ENCODE measurements at regions of chr6 and their contacts with region 1.

Region 1: GRCh38 chr6:55239099-55239498 is 64.8 kb downstream of the HCRTR2 start:
- DNase-seq: no peak
- H3K4me3 ChIP-seq: no peak overlapping the region
- H3K27ac ChIP-seq: no peak overlapping the region
- H3K27me3 ChIP-seq: no peaks in the 10 kb centered on the region
- CTCF ChIP-seq: no peak

Region 2: DNA sequence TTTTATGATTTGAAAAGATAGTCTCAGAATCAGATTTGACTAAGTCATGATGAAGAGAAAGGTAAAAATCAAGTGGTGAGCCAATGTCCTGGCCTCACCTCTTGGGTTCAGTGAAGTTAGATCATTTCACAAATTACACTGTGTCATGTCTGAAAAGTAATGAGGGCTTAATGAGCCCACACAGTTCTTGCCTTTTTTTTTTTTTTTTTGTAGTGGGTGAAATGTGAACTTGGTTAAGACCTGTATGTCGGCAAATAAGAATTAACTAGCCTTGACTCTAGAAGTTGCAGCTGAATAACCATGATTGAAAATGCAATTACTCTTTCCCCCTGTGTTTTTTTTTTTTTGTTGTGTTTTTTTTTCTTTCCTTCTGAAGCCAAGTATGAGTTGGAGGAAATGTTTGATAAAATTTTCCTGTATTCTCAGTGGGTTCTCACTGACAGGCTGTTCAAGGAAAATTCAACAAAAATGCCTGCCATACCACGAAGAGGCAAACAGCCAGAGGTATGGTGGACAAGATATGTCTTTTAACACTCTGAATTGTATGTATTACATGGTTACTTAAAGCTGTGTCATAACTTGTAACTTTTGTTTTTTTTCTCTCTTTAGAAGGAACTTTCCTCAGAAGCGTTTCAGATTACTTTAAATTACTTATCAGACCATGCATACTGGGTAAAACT is 1263.0 kb before region 1 on chr6:
- CTCF ChIA-PET with region 1: interaction called, 10 read pairs
- POLR2A ChIA-PET with region 1: no interaction called
- DNase-seq: no peak
- H3K4me3 ChIP-seq: no peak overlapping the region
- H3K27ac ChIP-seq: no peak overlapping the region
- H3K27me3 ChIP-seq: no peaks in the 10 kb centered on the region
- CTCF ChIP-seq: no peak

Region 3: GRCh38 chr6:55100686-55101085 is 138.4 kb before region 1 on chr6:
- CTCF ChIA-PET with region 1: no interaction called
- POLR2A ChIA-PET with region 1: no interaction called
- DNase-seq: no peak
- H3K4me3 ChIP-seq: no peak overlapping the region
- H3K27ac ChIP-seq: no peak overlapping the region
- H3K27me3 ChIP-seq: no peaks in the 10 kb centered on the region
- CTCF ChIP-seq: no peak

Region 4: GRCh38 chr6:55141611-55142010 is 97.5 kb before region 1 on chr6:
- CTCF ChIA-PET with region 1: no interaction called
- POLR2A ChIA-PET with region 1: no interaction called
- DNase-seq: no peak
- H3K4me3 ChIP-seq: no peak overlapping the region
- H3K27ac ChIP-seq: no peak overlapping the region
- H3K27me3 ChIP-seq: no peaks in the 10 kb centered on the region
- CTCF ChIP-seq: no peak